HAP-1 (cell line): ENCODE measurements at regions of chr6 and their contacts with region 1.

Region 1: GRCh38 chr6:71383901-71384489 is 95.4 kb downstream of the OGFRL1 start:
- DNase-seq: peak; percentile 44 to 62
- H3K4me3 ChIP-seq: no peak overlapping the region
- H3K4me1 ChIP-seq: no peaks in the 10 kb centered on the region
- H3K27me3 ChIP-seq: 0 out of 2 replicates have a peak, but pooled peaks cover 5% of the 10 kb centered on the region

Region 2: DNA sequence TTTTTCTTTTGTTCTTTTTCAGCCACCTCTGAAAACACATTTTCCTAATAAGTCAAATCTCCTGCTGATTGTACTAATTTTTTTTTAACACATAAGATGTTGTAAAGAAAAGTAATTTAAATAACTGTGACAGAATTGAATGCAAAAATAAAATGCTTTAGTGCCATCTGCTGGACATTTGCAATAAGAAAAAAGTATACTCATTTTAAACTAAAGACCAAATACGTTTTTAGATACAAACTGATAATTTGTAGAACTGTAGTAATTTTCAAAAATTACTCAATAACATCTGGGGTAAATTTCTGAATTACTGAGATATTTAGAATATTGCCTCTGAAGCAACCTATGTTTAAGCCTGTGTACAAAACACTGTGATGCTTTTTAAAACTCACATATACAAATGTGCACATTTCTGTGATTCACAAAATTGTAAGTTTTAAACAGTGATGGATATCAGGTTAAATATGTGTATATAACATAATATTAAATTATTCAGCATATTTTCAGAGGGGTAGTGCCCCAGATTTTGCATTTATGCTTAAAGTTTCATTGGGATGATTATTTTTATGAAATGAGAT is 701.1 kb after region 1 on chr6:
- in situ Hi-C with region 1: loop called (anchors 25 kb)
- DNase-seq: peak in 1 of 2 experiments; percentile 34
- H3K4me3 ChIP-seq: no peak overlapping the region
- H3K4me1 ChIP-seq: peaks cover 7% of the 10 kb centered on the region; the same call in 1 of the 2 replicates
- H3K27me3 ChIP-seq: peaks cover 9% of the 10 kb centered on the region